ENCODE measurements at regions of chr20 and their contacts with region 1.

Region 1: GRCh38 chr20:5090191-5090590 is 29.6 kb downstream of the PCNA start:
- DNase-seq: no peak
- H3K4me3 ChIP-seq: no peak overlapping the region
- H3K27ac ChIP-seq: peak overlapping the region; percentile 8
- H3K4me1 ChIP-seq: no peaks in the 10 kb centered on the region
- H3K27me3 ChIP-seq: no peaks in the 10 kb centered on the region
- CTCF ChIP-seq: no peak

Region 2: GRCh38 chr20:5001174-5002076 is 88.8 kb before region 1 on chr20 and contains the start of gene SLC23A2:
- intact Hi-C with region 1: loop called (anchors 10 kb)
- DNase-seq: peak; percentile 34
- H3K4me3 ChIP-seq: peak within 1 kb of the TSS; percentile 56
- H3K27ac ChIP-seq: no peak within 1 kb of the TSS
- H3K4me1 ChIP-seq: peaks cover 4% of the 10 kb centered on the region
- H3K27me3 ChIP-seq: no peaks in the 10 kb centered on the region
- CTCF ChIP-seq: no peak
- total RNA-seq, gene SLC23A2: 4.6 to 5.1 TPM

Region 3: GRCh38 chr20:5150226-5151076 is 60.3 kb after region 1 on chr20:
- intact Hi-C with region 1: no loop called
- DNase-seq: peak; percentile 27
- H3K4me3 ChIP-seq: no peak overlapping the region
- H3K27ac ChIP-seq: peak overlapping the region; percentile 40
- H3K4me1 ChIP-seq: peaks cover 6% of the 10 kb centered on the region
- H3K27me3 ChIP-seq: no peaks in the 10 kb centered on the region
- CTCF ChIP-seq: no peak

Region 4: DNA sequence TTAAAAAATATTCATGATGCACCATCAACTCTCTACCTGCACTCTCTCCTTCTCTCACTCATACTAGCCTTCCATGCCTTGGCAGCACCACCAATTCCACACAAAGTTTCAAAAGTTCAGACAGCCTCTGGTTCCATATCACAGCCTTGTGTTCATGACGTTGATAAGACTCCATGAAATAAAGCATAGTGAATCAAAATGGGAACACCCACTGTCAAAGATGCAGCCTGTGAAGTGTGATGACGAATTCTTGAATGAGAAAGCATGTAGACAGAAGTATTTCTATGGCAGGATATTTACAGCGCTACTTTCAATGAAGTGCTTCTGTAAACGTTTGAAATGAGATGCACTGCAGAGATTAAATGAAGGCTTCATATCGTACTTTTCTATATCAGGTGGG is 1109.9 kb after region 1 on chr20:
- intact Hi-C with region 1: no loop called
- DNase-seq: no peak
- H3K4me3 ChIP-seq: no peak overlapping the region
- H3K27ac ChIP-seq: no peak overlapping the region
- H3K4me1 ChIP-seq: no peaks in the 10 kb centered on the region
- H3K27me3 ChIP-seq: no peaks in the 10 kb centered on the region
- CTCF ChIP-seq: no peak